Naive thymus-derived CD4-positive, alpha-beta T cell (primary cell): ENCODE measurements at regions of chr2 and their contacts with region 1.

Region 1: GRCh38 chr2:42810121-42810970 is 18.0 kb upstream of the HAAO start:
- DNase-seq: peak; percentile 96 to 99 (median 98)
- ATAC-seq: peak; percentile 90
- H3K4me3 ChIP-seq: peak overlapping the region; percentile 99
- H3K4me3 Mint-ChIP-seq: peak overlapping the region; percentile 90 to 99 (median 98)
- H3K27ac ChIP-seq: peak overlapping the region; percentile 99
- H3K27ac Mint-ChIP-seq: peak overlapping the region; percentile 93 to 100 (median 99)
- H3K4me1 ChIP-seq: peaks cover 0 to 3% of the 10 kb centered on the region in 2 donors
- H3K4me1 Mint-ChIP-seq: peaks cover 0 to 35% (median 20%) of the 10 kb centered on the region in 7 donors
- H3K27me3 ChIP-seq: no peaks in the 10 kb centered on the region
- H3K27me3 Mint-ChIP-seq: peaks cover 0 to 28% (median 0%) of the 10 kb centered on the region in 5 donors

Region 2: DNA sequence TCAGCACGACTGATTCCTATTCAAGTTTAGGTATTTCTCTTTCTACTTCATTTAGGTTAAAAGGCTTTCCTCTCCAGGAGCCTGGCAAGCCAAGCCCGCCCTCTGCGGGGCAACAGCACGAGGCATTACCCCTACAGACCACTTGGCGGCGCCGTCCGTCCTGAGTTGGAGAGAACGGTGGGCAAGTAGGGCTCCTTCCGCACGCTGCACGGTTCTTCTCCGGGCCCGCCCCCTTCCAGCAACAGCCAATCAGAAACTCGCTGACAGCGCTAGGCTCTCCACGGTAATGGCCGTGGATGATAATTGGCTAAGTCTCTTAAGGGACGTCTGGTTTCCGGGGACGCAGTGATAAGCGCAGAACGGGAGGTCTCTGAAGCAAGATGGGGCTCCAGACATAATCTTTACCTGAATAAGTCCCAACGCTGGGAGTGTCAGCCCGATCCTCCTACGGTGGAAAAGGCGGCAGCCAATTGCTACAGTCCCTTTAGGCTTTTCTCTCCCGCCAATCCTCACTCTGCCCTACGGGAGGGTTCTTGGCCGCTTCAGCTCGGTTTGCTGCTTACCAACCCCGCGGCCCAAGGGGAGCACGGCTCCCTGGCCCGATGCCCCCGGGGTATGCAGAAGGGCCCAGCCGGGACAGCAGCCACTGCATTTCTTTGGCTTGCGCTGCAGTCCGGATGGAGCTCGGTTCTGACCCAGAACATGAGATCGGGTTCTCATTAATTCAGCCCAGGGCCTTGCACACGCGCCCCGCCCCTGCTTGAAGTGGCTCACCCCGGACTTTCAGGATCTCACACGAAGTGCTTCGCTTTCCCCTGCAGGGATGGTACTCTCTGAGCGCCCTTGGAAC is 969.4 kb before region 1 on chr2:
- CTCF ChIA-PET with region 1: no interaction called
- POLR2A ChIA-PET with region 1: no interaction called
- intact Hi-C with region 1: loop called (anchors 2 kb)
- DNase-seq: peak; percentile 93 to 98 (median 97)
- ATAC-seq: peak; percentile 99
- H3K4me3 ChIP-seq: peak overlapping the region; percentile 90
- H3K4me3 Mint-ChIP-seq: peak overlapping the region; percentile 90 to 99 (median 95)
- H3K27ac ChIP-seq: peak overlapping the region; percentile 83
- H3K27ac Mint-ChIP-seq: peak overlapping the region; percentile 84 to 99 (median 96)
- H3K4me1 ChIP-seq: peaks cover 0 to 5% of the 10 kb centered on the region in 2 donors
- H3K4me1 Mint-ChIP-seq: peaks cover 6 to 16% (median 10%) of the 10 kb centered on the region in 7 donors
- H3K27me3 ChIP-seq: no peaks in the 10 kb centered on the region
- H3K27me3 Mint-ChIP-seq: peaks cover 18 to 34% (median 24%) of the 10 kb centered on the region in 5 donors

Region 3: DNA sequence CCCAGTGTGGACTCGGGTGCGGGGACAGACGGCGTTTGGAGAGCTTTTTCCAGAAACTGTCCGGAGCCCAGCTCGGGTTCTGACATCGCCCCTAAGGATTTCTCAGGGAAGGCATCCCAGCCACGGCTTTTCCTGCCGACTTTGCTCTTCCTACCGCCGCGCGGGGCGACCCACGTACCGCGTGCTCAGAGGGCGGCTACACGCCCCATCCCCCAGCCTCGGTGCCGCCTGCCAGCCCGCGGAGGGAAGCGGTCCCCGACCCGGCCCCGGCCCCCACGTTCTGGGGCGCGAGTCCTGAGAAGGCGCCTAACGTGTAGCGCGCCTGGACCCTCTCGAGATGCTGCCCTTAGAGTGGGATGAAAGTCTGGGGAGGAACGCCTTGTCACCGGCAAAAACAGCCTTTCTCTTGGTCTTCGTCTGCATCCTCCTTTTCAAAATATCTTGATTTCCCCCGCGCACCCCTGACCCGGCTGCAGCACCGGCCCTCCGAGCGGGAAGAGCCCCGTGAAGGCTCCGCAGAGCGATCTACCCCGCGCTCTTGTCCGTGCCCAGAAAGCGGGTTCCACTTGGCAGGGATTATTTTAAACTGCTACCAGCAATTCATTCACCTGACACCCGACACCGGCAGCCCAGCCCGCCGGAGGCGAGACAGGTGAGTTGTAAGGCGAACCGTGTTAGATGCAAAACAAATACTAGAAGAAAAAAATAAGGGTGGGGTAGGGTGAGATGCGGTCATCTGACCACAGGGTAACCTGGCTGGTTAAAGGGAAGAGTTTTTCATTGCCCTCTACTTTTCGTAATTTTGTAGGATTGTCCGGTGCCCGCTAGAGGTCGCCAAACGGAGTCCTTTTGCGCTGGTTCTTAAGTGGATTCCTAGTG is 315.8 kb before region 1 on chr2:
- CTCF ChIA-PET with region 1: interaction called, 3 read pairs
- POLR2A ChIA-PET with region 1: interaction called, 5 read pairs
- intact Hi-C with region 1: loop called (anchors 1 to 5 kb)
- DNase-seq: peak; percentile 60 to 83 (median 77)
- ATAC-seq: peak; percentile 74
- H3K4me3 ChIP-seq: peak overlapping the region; percentile 60
- H3K4me3 Mint-ChIP-seq: peak overlapping the region; percentile 82 to 99 (median 96)
- H3K27ac ChIP-seq: peak overlapping the region; percentile 51
- H3K27ac Mint-ChIP-seq: peak overlapping the region; percentile 37 to 93 (median 83)
- H3K4me1 ChIP-seq: peaks cover 0 to 10% of the 10 kb centered on the region in 2 donors
- H3K4me1 Mint-ChIP-seq: peaks cover 0 to 18% (median 10%) of the 10 kb centered on the region in 7 donors
- H3K27me3 ChIP-seq: no peaks in the 10 kb centered on the region
- H3K27me3 Mint-ChIP-seq: peaks cover 0 to 49% (median 5%) of the 10 kb centered on the region in 5 donors

Region 4: DNA sequence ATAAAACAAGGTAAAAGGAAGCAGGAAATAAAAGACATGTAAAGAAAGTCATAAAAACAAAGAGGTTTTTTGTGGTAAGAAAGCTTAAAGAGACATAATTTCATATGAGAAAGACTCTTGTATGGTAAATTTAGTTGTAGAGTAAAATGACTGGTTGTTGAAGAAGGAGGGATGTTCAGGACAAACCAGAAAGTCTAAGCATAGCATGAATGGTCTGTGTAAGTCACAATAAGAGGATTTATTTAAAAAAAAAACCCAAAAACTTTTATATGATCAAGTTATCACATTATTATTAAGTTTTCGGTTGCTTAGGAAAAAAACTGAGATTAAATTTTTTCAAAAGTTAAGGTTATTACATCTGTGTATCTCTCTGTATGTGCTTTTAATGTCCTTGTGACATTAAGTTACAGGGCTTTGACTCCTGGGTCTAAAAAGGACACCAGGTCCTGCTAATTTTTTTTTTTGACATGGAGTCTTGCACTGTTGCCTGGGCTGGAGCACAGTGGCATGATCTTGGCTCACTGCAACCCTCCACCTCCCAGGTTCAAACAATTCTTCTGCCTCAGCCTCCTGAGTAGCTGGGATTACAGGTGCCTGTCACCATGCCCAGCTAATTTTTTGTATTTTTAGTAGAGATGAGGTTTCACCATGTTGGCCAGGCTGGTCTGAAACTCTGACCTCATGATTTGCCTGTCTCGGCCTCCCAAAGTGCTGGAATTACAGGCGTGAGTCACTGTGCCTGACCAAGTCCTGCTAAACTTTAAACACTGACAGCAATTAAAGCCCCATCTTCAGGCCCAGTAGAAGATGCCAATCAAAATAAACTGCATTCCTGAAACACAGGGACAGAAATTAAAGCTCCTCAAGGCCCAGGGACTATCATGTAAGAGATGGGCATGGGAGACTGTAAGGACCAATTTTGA is 32.2 kb before region 1 on chr2:
- CTCF ChIA-PET with region 1: no interaction called
- POLR2A ChIA-PET with region 1: interaction called, 3 read pairs
- intact Hi-C with region 1: loop called in 1 of 2 experiments (anchors 1 kb)
- DNase-seq: peak in 1 of 9 donors; percentile 7
- ATAC-seq: no peak
- H3K4me3 ChIP-seq: no peak overlapping the region
- H3K4me3 Mint-ChIP-seq: peak overlapping the region in 6 of 10 donors; percentile 1 to 66 (median 36)
- H3K27ac ChIP-seq: no peak overlapping the region
- H3K27ac Mint-ChIP-seq: peak overlapping the region in 6 of 9 donors; percentile 11 to 74 (median 68)
- H3K4me1 ChIP-seq: peaks cover 0 to 6% of the 10 kb centered on the region in 2 donors
- H3K4me1 Mint-ChIP-seq: peaks cover 4 to 45% (median 25%) of the 10 kb centered on the region in 7 donors
- H3K27me3 ChIP-seq: no peaks in the 10 kb centered on the region
- H3K27me3 Mint-ChIP-seq: no peaks in the 10 kb centered on the region

Region 5: GRCh38 chr2:42878581-42878980 is 68.2 kb after region 1 on chr2:
- CTCF ChIA-PET with region 1: no interaction called
- POLR2A ChIA-PET with region 1: no interaction called
- intact Hi-C with region 1: no loop called
- DNase-seq: no peak
- ATAC-seq: no peak
- H3K4me3 ChIP-seq: no peak overlapping the region
- H3K4me3 Mint-ChIP-seq: peak overlapping the region in 1 of 10 donors; percentile 7
- H3K27ac ChIP-seq: no peak overlapping the region
- H3K27ac Mint-ChIP-seq: peak overlapping the region in 2 of 9 donors; percentile 65 to 84
- H3K4me1 ChIP-seq: peaks cover 0 to 13% of the 10 kb centered on the region in 2 donors
- H3K4me1 Mint-ChIP-seq: peaks cover 3 to 24% (median 20%) of the 10 kb centered on the region in 7 donors
- H3K27me3 ChIP-seq: no peaks in the 10 kb centered on the region
- H3K27me3 Mint-ChIP-seq: no peaks in the 10 kb centered on the region

Region 6: DNA sequence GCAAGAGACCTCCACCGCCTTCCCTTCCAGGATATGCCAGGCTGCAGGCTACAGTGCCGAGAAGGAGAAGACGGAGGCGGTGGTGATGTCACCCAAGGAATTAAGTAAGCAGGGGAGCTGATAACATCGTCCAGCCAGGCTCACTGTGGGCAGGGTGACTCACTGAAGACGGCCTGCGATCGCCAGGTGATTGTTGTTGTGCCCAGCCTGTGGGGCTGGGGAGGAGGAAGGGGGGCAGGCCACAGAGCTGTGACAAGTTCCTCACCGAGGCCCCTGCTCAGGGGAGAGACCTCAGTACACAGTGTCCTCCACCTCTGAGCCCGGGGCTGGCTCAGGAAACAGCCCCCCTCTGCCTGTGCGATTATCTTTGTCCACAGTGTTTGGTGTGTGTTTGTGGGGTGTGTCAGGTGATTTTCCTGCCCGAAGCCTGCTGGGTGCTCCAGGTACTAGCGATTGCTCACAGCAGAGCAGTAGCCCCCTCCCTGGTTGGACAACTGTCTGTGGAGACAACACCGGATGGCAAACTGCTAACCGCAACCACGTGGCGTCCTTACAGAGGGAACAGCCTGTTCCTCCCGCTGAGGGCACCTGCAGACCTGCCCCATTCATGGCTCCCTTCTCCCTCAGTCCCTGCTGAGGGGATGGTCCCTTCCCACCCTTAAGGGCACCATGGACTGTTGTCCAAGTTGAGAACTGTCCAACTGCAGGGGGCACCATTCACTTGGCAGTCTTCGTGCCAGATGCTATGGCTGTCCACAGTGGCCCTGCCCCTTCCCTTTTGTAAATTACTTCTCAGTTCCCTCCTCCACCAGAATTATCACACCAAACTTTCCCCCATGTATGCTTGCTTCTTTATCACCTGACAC is 320.9 kb after region 1 on chr2:
- CTCF ChIA-PET with region 1: no interaction called
- POLR2A ChIA-PET with region 1: interaction called, 9 read pairs
- intact Hi-C with region 1: loop called (anchors 2 to 5 kb)
- DNase-seq: peak; percentile 44 to 92 (median 82)
- ATAC-seq: peak; percentile 60
- H3K4me3 ChIP-seq: peak overlapping the region; percentile 51
- H3K4me3 Mint-ChIP-seq: peak overlapping the region; percentile 36 to 86 (median 68)
- H3K27ac ChIP-seq: peak overlapping the region; percentile 96
- H3K27ac Mint-ChIP-seq: peak overlapping the region; percentile 88 to 100 (median 98)
- H3K4me1 ChIP-seq: peaks cover 90 to 92% of the 10 kb centered on the region in 2 donors
- H3K4me1 Mint-ChIP-seq: peaks cover 67 to 89% (median 85%) of the 10 kb centered on the region in 7 donors
- H3K27me3 ChIP-seq: no peaks in the 10 kb centered on the region
- H3K27me3 Mint-ChIP-seq: no peaks in the 10 kb centered on the region

Region 7: GRCh38 chr2:43637030-43637803 is 826.9 kb after region 1 on chr2 and contains the start of gene PLEKHH2:
- CTCF ChIA-PET with region 1: interaction called, 3 read pairs
- POLR2A ChIA-PET with region 1: no interaction called
- intact Hi-C with region 1: loop called in 1 of 2 experiments (anchors 1 kb)
- DNase-seq: peak; percentile 69 to 89 (median 84)
- ATAC-seq: peak; percentile 100
- H3K4me3 ChIP-seq: peak within 1 kb of the TSS; percentile 93
- H3K4me3 Mint-ChIP-seq: peak within 1 kb of the TSS; percentile 87 to 100 (median 95)
- H3K27ac ChIP-seq: peak within 1 kb of the TSS; percentile 56
- H3K27ac Mint-ChIP-seq: peak within 1 kb of the TSS; percentile 10 to 90 (median 80)
- H3K4me1 ChIP-seq: peaks cover 0 to 10% of the 10 kb centered on the region in 2 donors
- H3K4me1 Mint-ChIP-seq: peaks cover 6 to 21% (median 19%) of the 10 kb centered on the region in 7 donors
- H3K27me3 ChIP-seq: peaks cover 0 to 4% of the 10 kb centered on the region in 2 donors
- H3K27me3 Mint-ChIP-seq: peaks cover 16 to 55% (median 28%) of the 10 kb centered on the region in 5 donors
- total RNA-seq, gene PLEKHH2: 0.02 to 2.8 (median 2.0) TPM

Region 8: DNA sequence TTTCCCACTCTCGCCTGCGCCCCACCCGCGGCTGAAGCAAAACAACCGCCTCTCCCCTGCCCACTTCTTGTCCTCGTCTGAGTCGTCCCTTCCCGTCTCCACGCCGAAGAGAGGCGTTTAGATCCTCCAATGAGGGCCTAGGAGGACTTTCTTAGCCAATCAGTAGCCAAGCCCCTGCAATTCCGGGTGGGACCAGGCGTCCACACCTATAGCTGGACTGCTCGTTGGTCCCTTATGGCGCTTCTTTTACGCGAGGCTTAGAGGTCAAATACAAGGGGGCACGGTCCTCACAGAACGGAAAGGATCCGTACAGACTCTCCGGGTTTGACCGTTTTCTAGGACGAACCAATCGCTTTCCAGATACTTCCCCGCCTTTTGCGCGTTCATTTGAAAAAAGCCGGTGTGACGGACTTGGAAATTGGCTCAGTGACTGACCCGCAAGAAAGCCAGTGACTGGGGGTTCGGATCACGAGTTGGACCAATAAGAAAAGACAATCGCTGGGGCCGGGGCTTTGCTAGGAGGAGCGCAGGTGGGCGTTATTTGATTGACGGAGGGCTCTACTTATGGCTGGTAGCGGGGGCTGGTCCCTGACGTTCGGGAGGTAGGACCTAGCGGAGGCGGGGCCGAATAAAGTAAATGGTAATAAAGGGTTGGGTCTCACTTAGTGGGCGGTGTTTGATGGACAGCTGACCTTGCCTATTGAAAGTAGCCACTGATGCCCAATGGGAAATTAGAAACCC is 1357.8 kb after region 1 on chr2:
- CTCF ChIA-PET with region 1: no interaction called
- POLR2A ChIA-PET with region 1: interaction called, 5 read pairs
- intact Hi-C with region 1: loop called (anchors 1 kb)
- DNase-seq: peak; percentile 78 to 100 (median 99)
- ATAC-seq: peak; percentile 87
- H3K4me3 ChIP-seq: peak overlapping the region; percentile 80
- H3K4me3 Mint-ChIP-seq: peak overlapping the region; percentile 92 to 100 (median 96)
- H3K27ac ChIP-seq: peak overlapping the region; percentile 96
- H3K27ac Mint-ChIP-seq: peak overlapping the region; percentile 99 to 100 (median 100)
- H3K4me1 ChIP-seq: peaks cover 16 to 28% of the 10 kb centered on the region in 2 donors
- H3K4me1 Mint-ChIP-seq: peaks cover 29 to 38% (median 35%) of the 10 kb centered on the region in 7 donors
- H3K27me3 ChIP-seq: no peaks in the 10 kb centered on the region
- H3K27me3 Mint-ChIP-seq: no peaks in the 10 kb centered on the region